Caco-2 (cell line): ENCODE measurements at regions of chr1 and their contacts with region 1.

Region 1: GRCh38 chr1:235513495-235514366 is 9.5 kb upstream of the B3GALNT2 start:
- DNase-seq: peak in 1 of 2 experiments; percentile 72
- H3K4me3 ChIP-seq: no peak overlapping the region
- H3K4me3 Mint-ChIP-seq: no peak overlapping the region
- H3K27ac Mint-ChIP-seq: no peak overlapping the region
- H3K4me1 ChIP-seq: no peaks in the 10 kb centered on the region
- H3K4me1 Mint-ChIP-seq: no peaks in the 10 kb centered on the region
- H3K27me3 ChIP-seq: no peaks in the 10 kb centered on the region
- H3K27me3 Mint-ChIP-seq: peaks cover 2% of the 10 kb centered on the region
- CTCF ChIP-seq: peak; percentile 80 to 89

Region 2: GRCh38 chr1:235450886-235451483 is 62.7 kb before region 1 on chr1:
- CTCF ChIA-PET with region 1: no interaction called
- POLR2A ChIA-PET with region 1: no interaction called
- intact Hi-C with region 1: no loop called
- DNase-seq: no peak
- H3K4me3 ChIP-seq: no peak overlapping the region
- H3K4me3 Mint-ChIP-seq: no peak overlapping the region
- H3K27ac Mint-ChIP-seq: no peak overlapping the region
- H3K4me1 ChIP-seq: no peaks in the 10 kb centered on the region
- H3K4me1 Mint-ChIP-seq: no peaks in the 10 kb centered on the region
- H3K27me3 ChIP-seq: no peaks in the 10 kb centered on the region
- H3K27me3 Mint-ChIP-seq: no peaks in the 10 kb centered on the region
- CTCF ChIP-seq: no peak

Region 3: DNA sequence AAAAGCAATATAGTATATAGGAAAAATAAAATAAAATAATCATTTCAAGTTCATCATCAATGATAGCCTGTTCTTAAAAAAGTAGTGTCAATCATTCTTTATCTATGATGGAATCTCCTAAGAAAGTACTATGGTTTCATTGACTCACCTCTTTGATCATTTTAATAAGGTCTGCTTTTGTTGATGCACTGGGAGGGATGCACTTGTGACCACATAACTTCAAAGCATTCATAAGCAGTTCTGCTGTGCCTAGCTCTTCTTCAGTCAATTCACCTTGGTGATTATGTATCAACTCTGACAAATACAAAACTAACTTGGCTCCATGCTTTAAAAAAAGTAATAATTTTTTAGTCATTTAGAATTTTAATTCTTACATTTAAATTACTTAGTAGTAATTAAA is 220.6 kb after region 1 on chr1:
- CTCF ChIA-PET with region 1: no interaction called
- POLR2A ChIA-PET with region 1: no interaction called
- intact Hi-C with region 1: loop called (anchors 1 kb)
- DNase-seq: no peak
- H3K4me3 ChIP-seq: no peak overlapping the region
- H3K4me3 Mint-ChIP-seq: no peak overlapping the region
- H3K27ac Mint-ChIP-seq: no peak overlapping the region
- H3K4me1 ChIP-seq: no peaks in the 10 kb centered on the region
- H3K4me1 Mint-ChIP-seq: no peaks in the 10 kb centered on the region
- H3K27me3 ChIP-seq: no peaks in the 10 kb centered on the region
- H3K27me3 Mint-ChIP-seq: no peaks in the 10 kb centered on the region
- CTCF ChIP-seq: no peak

Region 4: GRCh38 chr1:235783148-235783776 is 269.5 kb after region 1 on chr1:
- CTCF ChIA-PET with region 1: no interaction called
- POLR2A ChIA-PET with region 1: no interaction called
- intact Hi-C with region 1: loop called (anchors 1 kb)
- DNase-seq: peak in 1 of 2 experiments; percentile 26
- H3K4me3 ChIP-seq: no peak overlapping the region
- H3K4me3 Mint-ChIP-seq: no peak overlapping the region
- H3K27ac Mint-ChIP-seq: no peak overlapping the region
- H3K4me1 ChIP-seq: no peaks in the 10 kb centered on the region
- H3K4me1 Mint-ChIP-seq: no peaks in the 10 kb centered on the region
- H3K27me3 ChIP-seq: no peaks in the 10 kb centered on the region
- H3K27me3 Mint-ChIP-seq: no peaks in the 10 kb centered on the region
- CTCF ChIP-seq: peak; percentile 41 to 62

Region 5: GRCh38 chr1:235843461-235843961 is 329.8 kb after region 1 on chr1:
- CTCF ChIA-PET with region 1: interaction called, 8 read pairs
- POLR2A ChIA-PET with region 1: no interaction called
- intact Hi-C with region 1: loop called (anchors 2 kb)
- DNase-seq: peak in 1 of 2 experiments; percentile 35
- H3K4me3 ChIP-seq: no peak overlapping the region
- H3K4me3 Mint-ChIP-seq: no peak overlapping the region
- H3K27ac Mint-ChIP-seq: no peak overlapping the region
- H3K4me1 ChIP-seq: no peaks in the 10 kb centered on the region
- H3K4me1 Mint-ChIP-seq: peaks cover 12% of the 10 kb centered on the region
- H3K27me3 ChIP-seq: no peaks in the 10 kb centered on the region
- H3K27me3 Mint-ChIP-seq: peaks cover 4% of the 10 kb centered on the region
- CTCF ChIP-seq: peak; percentile 55 to 69